CD4-positive, alpha-beta T cell (primary cell): ENCODE measurements at regions of chr15 and their contacts with region 1.

Region 1: DNA sequence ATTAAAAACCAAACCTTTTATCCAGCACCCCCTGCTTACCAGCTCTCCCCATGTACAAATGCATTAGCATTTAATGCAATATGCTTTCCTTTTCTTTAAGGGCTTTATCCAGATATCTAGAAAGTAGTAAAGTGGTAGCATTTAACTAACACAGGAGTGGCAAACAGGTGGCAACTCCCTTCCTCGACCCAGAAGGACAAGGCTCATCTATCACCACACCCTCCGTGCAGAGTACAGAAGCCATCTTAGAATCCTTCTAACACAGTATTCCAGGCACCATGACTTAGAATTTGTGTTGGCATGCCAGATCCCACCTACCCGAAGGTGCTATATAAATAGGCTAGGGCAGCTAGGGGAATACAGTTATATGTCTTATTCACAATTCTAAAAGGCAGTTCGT is 148.6 kb upstream of the NSMCE3 start:
- DNase-seq: no peak
- ATAC-seq: no peak
- H3K4me3 ChIP-seq: no peak overlapping the region
- H3K4me3 Mint-ChIP-seq: no peak overlapping the region
- H3K27ac ChIP-seq: no peak overlapping the region
- H3K27ac Mint-ChIP-seq: no peak overlapping the region
- H3K4me1 ChIP-seq: no peaks in the 10 kb centered on the region
- H3K4me1 Mint-ChIP-seq: no peaks in the 10 kb centered on the region
- H3K27me3 ChIP-seq: no peaks in the 10 kb centered on the region
- H3K27me3 Mint-ChIP-seq: peaks cover 12% of the 10 kb centered on the region
- CTCF ChIP-seq: no peak

Region 2: GRCh38 chr15:29465196-29465595 is 47.0 kb after region 1 on chr15:
- CTCF ChIA-PET with region 1: no interaction called
- POLR2A ChIA-PET with region 1: no interaction called
- intact Hi-C with region 1: loop called in 1 of 2 experiments (anchors 5 kb)
- DNase-seq: no peak
- ATAC-seq: no peak
- H3K4me3 ChIP-seq: no peak overlapping the region
- H3K4me3 Mint-ChIP-seq: no peak overlapping the region
- H3K27ac ChIP-seq: no peak overlapping the region
- H3K27ac Mint-ChIP-seq: no peak overlapping the region
- H3K4me1 ChIP-seq: no peaks in the 10 kb centered on the region
- H3K4me1 Mint-ChIP-seq: no peaks in the 10 kb centered on the region
- H3K27me3 ChIP-seq: no peaks in the 10 kb centered on the region
- H3K27me3 Mint-ChIP-seq: peaks cover 3% of the 10 kb centered on the region
- CTCF ChIP-seq: no peak